PC-9 (cell line): ENCODE measurements at regions of chr2 and their contacts with region 1.

Region 1: GRCh38 chr2:217277646-217278398 is 418.0 kb upstream of the TNP1 start:
- DNase-seq: peak; percentile 66 to 74
- H3K4me3 ChIP-seq: no peak overlapping the region
- H3K27ac ChIP-seq: peak overlapping the region; percentile 25; the same call in 1 of the 2 replicates
- H3K4me1 ChIP-seq: peaks cover 25% of the 10 kb centered on the region; the same call in 1 of the 2 replicates
- H3K27me3 ChIP-seq: no peaks in the 10 kb centered on the region
- CTCF ChIP-seq: no peak

Region 2: DNA sequence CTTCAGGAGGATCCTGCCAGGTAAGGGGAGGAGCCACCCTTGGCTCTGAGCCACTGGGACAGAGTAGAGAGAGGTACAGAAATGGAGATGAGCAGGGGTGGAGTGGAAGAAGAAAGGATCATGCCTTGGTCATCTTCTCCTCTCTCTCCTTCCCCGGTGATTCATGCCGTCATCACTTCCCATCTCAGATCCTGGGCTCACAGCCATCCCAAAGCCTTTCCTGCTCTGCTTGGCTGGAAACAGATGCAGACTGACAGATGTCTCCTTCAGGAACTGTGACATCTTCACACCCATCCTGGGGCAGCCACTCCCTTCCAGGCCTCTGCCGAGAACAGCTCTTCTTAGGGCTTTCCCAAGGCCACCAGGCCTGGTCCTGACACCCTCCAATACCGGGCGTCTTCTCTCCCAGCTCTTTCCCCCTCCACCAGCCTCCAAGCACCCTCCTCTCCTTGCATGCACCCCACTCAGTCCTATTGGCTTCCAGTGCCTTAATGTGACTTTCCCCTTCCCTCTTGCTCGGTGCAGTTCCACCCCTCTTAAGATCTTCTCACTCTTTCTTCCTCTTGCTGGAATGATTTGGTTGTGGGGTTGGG is 359.6 kb before region 1 on chr2:
- CTCF ChIA-PET with region 1: no interaction called
- POLR2A ChIA-PET with region 1: interaction called, 10 read pairs
- intact Hi-C with region 1: no loop called
- DNase-seq: peak in 1 of 2 experiments; percentile 21
- H3K4me3 ChIP-seq: no peak overlapping the region
- H3K27ac ChIP-seq: no peak overlapping the region
- H3K4me1 ChIP-seq: 0 out of 2 replicates have a peak, but pooled peaks cover 8% of the 10 kb centered on the region
- H3K27me3 ChIP-seq: no peaks in the 10 kb centered on the region
- CTCF ChIP-seq: no peak

Region 3: GRCh38 chr2:217223222-217223930 is 54.4 kb before region 1 on chr2:
- CTCF ChIA-PET with region 1: no interaction called
- POLR2A ChIA-PET with region 1: no interaction called
- intact Hi-C with region 1: loop called (anchors 1 kb)
- DNase-seq: peak in 1 of 2 experiments; percentile 93
- H3K4me3 ChIP-seq: peak overlapping the region; percentile 17
- H3K27ac ChIP-seq: peak overlapping the region; percentile 95
- H3K4me1 ChIP-seq: peaks cover 29% of the 10 kb centered on the region
- H3K27me3 ChIP-seq: no peaks in the 10 kb centered on the region
- CTCF ChIP-seq: no peak

Region 4: GRCh38 chr2:217325251-217325650 is 47.4 kb after region 1 on chr2:
- CTCF ChIA-PET with region 1: no interaction called
- POLR2A ChIA-PET with region 1: no interaction called
- intact Hi-C with region 1: no loop called
- DNase-seq: no peak
- H3K4me3 ChIP-seq: no peak overlapping the region
- H3K27ac ChIP-seq: peak overlapping the region; percentile 67
- H3K4me1 ChIP-seq: peaks cover 55% of the 10 kb centered on the region
- H3K27me3 ChIP-seq: no peaks in the 10 kb centered on the region
- CTCF ChIP-seq: no peak